ENCODE measurements at regions of chr11 and their contacts with region 1.

Region 1: GRCh38 chr11:68121067-68121899 is at the start of gene CHKA:
- DNase-seq: peak; percentile 97
- ATAC-seq: peak; percentile 96
- total RNA-seq, gene CHKA: 7.6 TPM

Region 2: DNA sequence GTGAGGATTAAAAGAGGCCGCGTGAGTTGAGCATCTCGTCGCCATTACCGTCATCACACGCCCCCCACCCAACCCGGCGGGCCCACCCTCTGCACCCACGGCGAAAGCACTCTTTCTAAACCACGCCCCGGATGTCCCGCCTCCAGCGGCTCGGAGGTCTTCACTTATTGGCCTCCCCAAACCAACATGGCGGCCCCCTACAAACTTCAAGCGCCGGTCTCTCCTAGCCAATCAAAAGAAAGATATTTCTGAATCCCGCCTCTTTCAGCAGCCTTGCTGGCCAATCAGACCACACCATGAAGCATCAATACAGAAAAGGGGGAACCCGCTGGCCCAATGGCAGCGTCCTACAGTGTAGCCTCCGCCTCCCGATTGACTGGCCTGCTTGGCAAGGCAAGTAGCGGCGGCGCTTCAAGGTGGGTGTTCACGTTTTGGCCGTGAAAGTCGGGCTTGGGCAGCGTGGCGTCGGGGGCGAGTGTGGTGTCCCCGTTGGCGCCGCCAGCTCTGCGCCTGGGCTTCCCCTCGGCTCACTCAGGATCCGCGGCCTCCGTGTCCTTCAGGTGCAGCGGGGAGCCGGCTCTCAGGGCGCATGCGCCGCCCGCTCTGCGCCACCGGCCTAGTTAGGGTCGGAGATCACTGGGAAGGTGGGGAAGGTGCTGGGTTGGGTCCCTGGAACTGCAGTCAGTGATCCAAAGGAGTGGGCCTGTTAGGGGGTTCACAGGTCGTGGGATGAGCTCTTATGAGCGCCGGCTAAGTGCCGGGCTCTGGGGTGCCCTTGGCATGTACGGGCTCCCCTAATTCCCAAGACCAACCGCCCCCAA is 90.8 kb before region 1 on chr11 and contains the start of gene NDUFS8:
- intact Hi-C with region 1: loop called (anchors 5 kb)
- DNase-seq: peak; percentile 98
- ATAC-seq: peak; percentile 94
- total RNA-seq, gene NDUFS8: 479 TPM

Region 3: DNA sequence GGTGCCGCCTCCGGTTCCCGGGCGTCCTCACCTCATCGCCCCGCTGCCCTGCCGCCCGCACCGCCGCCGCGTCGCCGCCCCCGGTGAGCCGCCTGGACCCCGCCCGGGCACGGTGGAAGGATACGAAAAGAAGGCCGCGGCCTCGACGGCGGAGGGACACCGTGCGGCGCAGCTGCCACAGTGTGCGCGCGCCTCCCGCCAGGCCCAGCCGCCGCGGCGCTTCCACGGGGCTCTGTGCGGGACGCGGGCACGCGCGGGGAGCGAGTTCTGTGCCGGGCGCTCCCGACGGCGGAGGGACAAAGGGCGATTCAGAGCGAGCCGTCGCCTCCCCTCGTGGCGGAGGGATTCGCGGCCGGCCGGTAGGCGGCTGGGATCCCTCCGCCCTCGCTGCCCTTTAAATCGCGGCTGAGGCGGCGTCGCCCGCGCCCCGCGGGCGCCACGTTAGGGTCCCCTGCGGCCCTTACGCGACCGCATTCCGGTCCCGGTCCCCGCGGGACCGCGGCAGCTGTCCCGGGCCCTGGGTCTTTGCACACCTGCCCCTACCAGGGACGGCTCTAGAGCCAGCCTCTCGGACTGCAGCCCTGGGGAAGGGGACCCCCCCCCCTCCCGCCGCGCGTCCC is 92.4 kb after region 1 on chr11:
- intact Hi-C with region 1: loop called (anchors 5 kb)
- DNase-seq: peak; percentile 94
- ATAC-seq: peak; percentile 62

Region 4: DNA sequence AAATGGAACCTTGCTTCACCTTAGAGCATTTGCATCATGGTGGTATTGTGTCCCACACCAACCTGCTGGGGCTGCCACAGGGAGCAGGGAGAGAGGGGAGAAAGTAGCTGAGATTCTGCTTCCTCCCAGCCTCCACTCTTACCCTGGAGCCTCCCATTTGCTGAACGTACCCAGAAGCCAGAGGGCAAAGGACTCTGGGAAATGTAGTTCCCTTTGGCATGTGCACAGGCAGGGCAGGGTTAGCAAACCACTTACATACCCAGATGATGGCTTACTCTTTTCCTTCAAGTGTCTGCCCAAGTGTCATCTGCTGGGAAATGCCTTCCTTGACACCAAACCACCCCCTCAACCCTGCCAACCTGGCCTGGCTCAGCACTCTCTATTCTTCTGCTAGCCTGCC is 1051.4 kb after region 1 on chr11:
- intact Hi-C with region 1: no loop called
- DNase-seq: no peak
- ATAC-seq: no peak

Measured in Right ventricle myocardium inferior (tissue), 1 donor.